Psoas muscle (tissue), 8 donors: ENCODE measurements at regions of chr12 and their contacts with region 1.

Region 1: GRCh38 chr12:49580572-49581535 is 12.9 kb upstream of the MCRS1 start:
- DNase-seq: peak; percentile 73 to 86
- ATAC-seq: peak; percentile 82 to 97 (median 92)
- H3K4me3 ChIP-seq: no peak overlapping the region
- H3K27ac ChIP-seq: peak overlapping the region; percentile 21
- H3K4me1 ChIP-seq: peaks cover 11% of the 10 kb centered on the region
- H3K27me3 ChIP-seq: no peaks in the 10 kb centered on the region
- CTCF ChIP-seq: peak; percentile 76

Region 2: DNA sequence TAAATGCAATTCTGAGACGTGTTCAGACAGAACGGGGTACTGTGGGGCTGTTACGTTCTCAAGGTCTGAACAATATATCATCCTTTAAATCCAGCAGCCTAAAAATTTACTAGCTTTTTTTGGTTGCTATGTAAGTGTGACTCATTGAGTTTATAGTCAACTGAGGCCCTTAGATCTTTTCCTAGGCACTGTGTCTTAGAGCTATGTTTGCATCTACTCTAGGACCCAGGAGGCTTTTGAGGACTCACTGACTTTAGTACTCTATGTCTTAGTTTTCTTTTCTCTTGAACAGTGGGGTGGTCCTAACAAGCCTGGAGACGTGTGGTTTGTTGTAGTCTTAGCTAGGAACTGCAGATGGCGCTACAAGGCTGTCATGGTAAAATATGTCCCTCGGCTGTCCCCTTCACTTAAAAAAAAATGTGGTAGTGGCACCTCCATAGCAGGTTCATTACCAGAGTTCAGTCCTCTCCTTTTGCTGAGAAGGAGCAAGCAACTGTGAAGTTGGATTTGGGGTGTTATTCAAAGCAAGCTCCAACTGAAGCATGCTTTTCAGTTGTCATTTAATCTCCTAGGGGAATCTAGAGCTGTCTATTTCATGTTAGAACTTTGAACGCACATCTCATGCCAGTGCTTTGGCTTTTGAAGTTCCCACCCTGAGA is 222.2 kb before region 1 on chr12:
- intact Hi-C with region 1: loop called in 1 of 2 experiments (anchors 5 kb)
- DNase-seq: no peak
- ATAC-seq: peak; percentile 74 to 98 (median 90)
- H3K4me3 ChIP-seq: no peak overlapping the region
- H3K27ac ChIP-seq: no peak overlapping the region
- H3K4me1 ChIP-seq: peaks cover 4% of the 10 kb centered on the region
- H3K27me3 ChIP-seq: peaks cover 0 to 4% (median 0%) of the 10 kb centered on the region in 3 donors
- CTCF ChIP-seq: peak; percentile 79

Region 3: DNA sequence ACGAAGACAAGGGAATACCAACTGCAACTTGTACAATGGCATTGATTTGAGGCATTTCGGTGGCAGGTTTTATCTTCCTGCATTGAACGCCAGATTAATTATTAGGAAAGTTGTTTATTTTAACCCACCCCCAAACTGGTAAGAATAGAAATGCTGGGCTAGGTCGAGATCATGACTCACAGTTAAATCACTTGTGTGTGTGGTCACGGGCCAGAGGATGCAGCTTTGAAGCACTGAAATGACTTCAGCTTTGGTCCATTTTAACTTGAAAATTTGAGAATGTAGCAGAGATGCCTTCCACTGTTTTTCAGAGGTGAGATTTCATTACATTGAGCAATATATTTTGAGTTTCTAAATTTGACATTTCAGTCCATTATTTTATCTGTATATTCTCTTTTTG is 65.6 kb before region 1 on chr12:
- intact Hi-C with region 1: loop called in 1 of 2 experiments (anchors 5 kb)
- DNase-seq: no peak
- ATAC-seq: no peak
- H3K4me3 ChIP-seq: no peak overlapping the region
- H3K27ac ChIP-seq: no peak overlapping the region
- H3K4me1 ChIP-seq: no peaks in the 10 kb centered on the region
- H3K27me3 ChIP-seq: no peaks in the 10 kb centered on the region
- CTCF ChIP-seq: no peak

Region 4: DNA sequence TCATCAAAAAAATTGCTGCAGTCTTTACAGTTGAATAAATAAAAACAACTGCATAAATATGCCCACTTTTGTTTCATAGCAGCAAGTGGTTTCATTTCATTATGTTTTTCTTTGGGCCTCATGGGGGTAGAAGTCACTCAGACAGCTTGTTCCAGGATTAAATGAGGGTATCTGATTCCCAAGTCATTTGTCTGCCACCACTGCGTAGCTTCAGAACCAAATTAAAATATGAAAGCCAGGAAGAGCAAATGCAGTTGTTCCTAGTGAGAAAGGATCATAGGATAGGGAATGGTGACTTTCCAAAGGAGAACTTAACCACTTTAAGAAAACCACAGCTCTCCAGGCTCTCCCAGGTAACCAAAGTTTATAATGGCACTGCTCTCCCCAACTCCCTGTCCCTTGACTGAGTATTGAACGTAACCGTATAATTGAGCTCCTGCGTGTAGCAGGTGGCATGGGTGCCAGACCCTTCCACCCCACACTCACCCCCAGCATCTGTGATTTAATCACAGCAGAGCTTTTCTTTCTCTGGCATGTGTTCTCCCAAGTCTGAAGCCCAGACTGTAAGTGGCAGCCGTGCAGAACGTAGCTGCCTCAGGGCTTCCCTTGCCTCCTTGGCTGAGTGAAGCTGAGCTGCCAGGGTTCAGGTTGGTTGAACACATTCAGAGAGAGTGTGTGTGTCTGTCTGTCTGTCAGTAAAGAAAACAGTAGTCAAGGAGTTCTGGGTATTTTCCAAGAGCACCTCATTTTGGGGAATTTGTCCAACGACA is 53.3 kb before region 1 on chr12:
- intact Hi-C with region 1: no loop called
- DNase-seq: no peak
- ATAC-seq: no peak
- H3K4me3 ChIP-seq: no peak overlapping the region
- H3K27ac ChIP-seq: no peak overlapping the region
- H3K4me1 ChIP-seq: no peaks in the 10 kb centered on the region
- H3K27me3 ChIP-seq: no peaks in the 10 kb centered on the region
- CTCF ChIP-seq: no peak

Region 5: GRCh38 chr12:49538510-49539403 is 42.1 kb before region 1 on chr12 and contains the start of gene KCNH3:
- intact Hi-C with region 1: loop called in 1 of 2 experiments (anchors 5 kb)
- DNase-seq: peak; percentile 79 to 88
- ATAC-seq: peak; percentile 72 to 82 (median 76)
- H3K4me3 ChIP-seq: peak within 1 kb of the TSS; percentile 66
- H3K27ac ChIP-seq: no peak within 1 kb of the TSS
- H3K4me1 ChIP-seq: peaks cover 6% of the 10 kb centered on the region
- H3K27me3 ChIP-seq: peaks cover 0 to 50% (median 29%) of the 10 kb centered on the region in 3 donors
- CTCF ChIP-seq: no peak
- total RNA-seq, gene KCNH3: 0.04 to 0.32 TPM in 2 of 4 donors, not detected in the others

Region 6: GRCh38 chr12:49548822-49549648 is 31.8 kb before region 1 on chr12:
- intact Hi-C with region 1: loop called in 1 of 2 experiments (anchors 5 kb)
- DNase-seq: peak in 1 of 2 donors; percentile 67
- ATAC-seq: peak; percentile 25 to 59 (median 32)
- H3K4me3 ChIP-seq: peak overlapping the region; percentile 60
- H3K27ac ChIP-seq: no peak overlapping the region
- H3K4me1 ChIP-seq: peaks cover 19% of the 10 kb centered on the region
- H3K27me3 ChIP-seq: peaks cover 0 to 34% (median 0%) of the 10 kb centered on the region in 3 donors
- CTCF ChIP-seq: peak; percentile 36